Left cardiac atrium (tissue), 4 donors: ENCODE measurements at regions of chr18 and their contacts with region 1.

Region 1: GRCh38 chr18:62522504-62523254 is at the start of gene ZCCHC2:
- DNase-seq: peak; percentile 98
- ATAC-seq: peak; percentile 87 to 89
- total RNA-seq, gene ZCCHC2: 19.0 to 24.1 TPM

Region 2: DNA sequence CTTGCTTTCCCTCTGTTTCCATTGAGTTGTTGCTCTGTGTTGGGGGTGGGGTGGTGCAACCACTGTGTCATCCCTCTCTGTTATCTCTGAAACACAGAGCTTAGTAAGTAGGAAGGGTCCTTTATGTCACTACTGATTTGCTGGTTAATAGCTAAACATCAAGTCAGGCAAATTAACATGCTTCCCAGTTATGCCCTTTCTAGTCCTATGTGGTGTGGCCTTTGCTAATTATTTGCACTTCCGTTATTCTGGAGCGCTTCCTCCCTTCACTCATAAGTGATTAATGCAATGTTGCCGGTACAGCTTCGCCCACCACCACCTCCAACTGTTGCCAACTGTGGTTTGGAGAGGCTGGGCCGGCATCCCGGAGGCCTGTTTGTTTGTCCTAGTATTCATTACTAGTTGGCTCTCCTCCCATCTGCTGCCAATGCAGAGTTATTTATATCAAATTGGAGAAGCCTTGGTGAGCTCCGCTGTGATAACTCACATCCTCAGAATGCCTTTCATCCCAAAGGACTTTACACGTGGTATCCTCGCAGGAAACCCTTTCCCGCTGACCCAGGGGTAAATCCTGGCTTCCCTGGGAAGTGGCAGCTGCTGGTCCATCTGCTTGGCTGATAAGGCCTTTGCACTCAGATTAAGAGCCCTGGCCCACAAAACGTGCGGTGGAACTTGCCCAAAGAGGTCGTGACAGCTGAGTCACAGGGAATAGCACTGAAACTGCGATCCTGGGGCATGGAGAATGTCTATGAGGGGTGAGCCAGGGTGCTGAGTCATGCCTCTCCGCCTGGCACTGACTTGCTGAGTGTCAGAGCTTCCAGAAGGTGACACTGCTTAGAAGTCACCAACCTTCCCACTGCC is 71.9 kb before region 1 on chr18:
- intact Hi-C with region 1: loop called in 1 of 2 experiments (anchors 5 kb)
- DNase-seq: peak; percentile 83
- ATAC-seq: peak; percentile 89 to 97

Region 3: GRCh38 chr18:62576845-62577512 is 54.3 kb after region 1 on chr18:
- intact Hi-C with region 1: no loop called
- DNase-seq: no peak
- ATAC-seq: peak in 1 of 2 donors; percentile 34